MCF 10A (cell line): ENCODE measurements at regions of chr3 and their contacts with region 1.

Region 1: GRCh38 chr3:176430244-176431037 is 766.8 kb downstream of the TBL1XR1 start:
- DNase-seq: peak; percentile 61
- H3K4me3 Mint-ChIP-seq: no peak overlapping the region
- H3K27ac Mint-ChIP-seq: no peak overlapping the region
- H3K4me1 Mint-ChIP-seq: no peaks in the 10 kb centered on the region
- H3K27me3 Mint-ChIP-seq: no peaks in the 10 kb centered on the region
- CTCF ChIP-seq: peak; percentile 60

Region 2: GRCh38 chr3:174862143-174862542 is 1568.3 kb before region 1 on chr3:
- CTCF ChIA-PET with region 1: interaction called, 3 read pairs
- POLR2A ChIA-PET with region 1: no interaction called
- intact Hi-C with region 1: loop called (anchors 2 kb)
- DNase-seq: peak; percentile 69
- H3K4me3 Mint-ChIP-seq: no peak overlapping the region
- H3K27ac Mint-ChIP-seq: no peak overlapping the region
- H3K4me1 Mint-ChIP-seq: peaks cover 16% of the 10 kb centered on the region
- H3K27me3 Mint-ChIP-seq: no peaks in the 10 kb centered on the region
- CTCF ChIP-seq: peak; percentile 43

Region 3: GRCh38 chr3:175422744-175423143 is 1007.7 kb before region 1 on chr3:
- CTCF ChIA-PET with region 1: no interaction called
- POLR2A ChIA-PET with region 1: no interaction called
- intact Hi-C with region 1: loop called (anchors 5 kb)
- DNase-seq: no peak
- H3K4me3 Mint-ChIP-seq: no peak overlapping the region
- H3K27ac Mint-ChIP-seq: no peak overlapping the region
- H3K4me1 Mint-ChIP-seq: peaks cover 3% of the 10 kb centered on the region
- H3K27me3 Mint-ChIP-seq: no peaks in the 10 kb centered on the region
- CTCF ChIP-seq: no peak

Region 4: DNA sequence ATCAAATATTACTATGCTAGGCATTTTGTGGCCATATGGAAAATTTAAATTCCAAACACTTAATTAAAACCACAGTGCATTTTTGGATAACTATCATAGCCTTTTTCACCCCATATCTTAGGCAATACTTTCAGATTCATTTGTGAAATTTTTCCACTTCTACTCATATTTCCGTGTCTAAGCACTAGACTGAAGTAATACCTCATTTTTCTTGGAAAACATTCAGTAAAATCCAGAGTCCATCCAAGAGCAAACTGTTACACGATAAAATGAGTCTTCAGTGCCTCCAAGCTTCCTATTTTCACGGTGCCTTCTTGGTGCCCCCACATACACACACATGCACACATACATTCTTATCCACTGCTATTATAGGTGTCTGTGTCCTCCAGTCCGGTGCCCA is 79.0 kb before region 1 on chr3:
- CTCF ChIA-PET with region 1: no interaction called
- POLR2A ChIA-PET with region 1: no interaction called
- intact Hi-C with region 1: no loop called
- DNase-seq: peak; percentile 55
- H3K4me3 Mint-ChIP-seq: no peak overlapping the region
- H3K27ac Mint-ChIP-seq: no peak overlapping the region
- H3K4me1 Mint-ChIP-seq: peaks cover 6% of the 10 kb centered on the region
- H3K27me3 Mint-ChIP-seq: no peaks in the 10 kb centered on the region
- CTCF ChIP-seq: no peak